ENCODE measurements at regions of chr2 and their contacts with region 1.

Region 1: DNA sequence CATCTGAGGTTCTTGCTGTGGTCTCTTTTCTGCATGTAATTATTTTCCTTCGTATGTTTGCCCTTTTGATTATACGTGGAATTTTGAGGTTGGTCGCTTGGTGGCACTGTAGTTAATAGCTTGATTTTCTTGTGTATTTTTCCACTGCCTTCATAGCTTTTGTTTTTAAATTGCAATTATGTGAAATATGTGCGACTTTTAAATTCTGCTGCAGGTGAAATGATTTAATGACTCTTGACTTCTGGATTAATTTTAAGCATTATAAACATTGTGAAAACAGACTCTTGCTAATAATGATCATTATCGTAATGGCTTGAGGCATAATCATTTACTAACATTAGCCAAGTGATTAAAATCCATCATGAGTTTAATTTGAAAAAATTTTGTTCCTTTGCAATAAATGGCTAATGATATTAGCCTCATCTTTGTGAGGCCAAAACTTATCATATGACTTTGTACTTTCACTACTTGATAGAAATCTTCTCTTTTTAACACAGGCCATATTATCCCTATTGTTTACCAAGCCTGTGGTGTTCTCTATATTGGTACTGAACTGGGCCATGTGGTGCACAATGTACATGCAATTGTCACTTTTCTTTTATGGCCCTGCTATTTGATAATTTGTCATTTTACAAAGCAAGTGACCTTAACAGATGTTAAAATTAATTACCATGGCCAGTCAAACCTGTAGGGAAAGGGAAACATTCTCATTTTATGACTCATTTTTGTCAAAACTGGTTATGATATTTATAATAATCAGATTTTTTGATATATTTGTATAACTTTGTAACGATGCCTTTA is 62.8 kb upstream of the NEUROD1 start:
- DNase-seq: peak in 1 of 2 donors; percentile 46
- ATAC-seq: peak; percentile 72

Region 2: GRCh38 chr2:180394305-180394704 is 1348.8 kb before region 1 on chr2:
- intact Hi-C with region 1: no loop called
- DNase-seq: no peak
- ATAC-seq: no peak

Region 3: DNA sequence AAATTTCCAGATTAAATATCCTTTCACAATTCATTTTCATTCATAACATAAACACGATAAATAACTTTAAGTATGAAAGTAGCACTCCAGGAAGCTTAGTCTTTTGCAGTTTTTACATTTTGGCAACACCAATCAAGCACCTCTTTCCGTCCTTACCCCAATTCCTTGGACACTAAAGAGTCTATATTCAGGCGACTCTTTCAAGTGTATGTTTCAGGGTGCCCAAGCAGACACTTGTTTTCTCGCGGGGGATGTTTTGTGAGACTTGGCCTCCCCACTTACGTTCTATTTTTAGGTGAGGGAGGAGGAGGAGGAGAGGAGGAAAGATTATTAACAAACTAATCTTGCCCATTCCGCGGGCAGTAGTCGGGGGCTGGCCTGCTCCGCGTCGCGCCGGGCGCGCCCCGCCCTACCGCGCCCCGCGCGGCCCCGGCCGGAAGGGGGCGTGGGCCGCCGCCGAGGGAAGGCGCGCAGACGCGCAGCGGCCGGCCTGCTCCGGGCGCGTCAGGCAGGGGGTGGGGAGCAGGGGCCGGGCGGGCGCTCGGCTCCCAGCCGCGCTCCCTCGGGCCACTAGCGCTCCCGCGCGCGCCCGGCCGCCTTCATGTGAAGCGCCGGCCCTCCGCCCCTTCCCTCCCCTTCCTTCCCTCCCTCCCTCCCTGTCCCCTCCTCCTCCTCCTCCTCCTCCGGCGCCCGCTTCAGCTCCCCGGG is 148.3 kb after region 1 on chr2 and contains the start of gene ITPRID2:
- intact Hi-C with region 1: no loop called
- DNase-seq: peak; percentile 84 to 90
- ATAC-seq: peak; percentile 78
- total RNA-seq, gene ITPRID2: 287 to 367 TPM

Region 4: DNA sequence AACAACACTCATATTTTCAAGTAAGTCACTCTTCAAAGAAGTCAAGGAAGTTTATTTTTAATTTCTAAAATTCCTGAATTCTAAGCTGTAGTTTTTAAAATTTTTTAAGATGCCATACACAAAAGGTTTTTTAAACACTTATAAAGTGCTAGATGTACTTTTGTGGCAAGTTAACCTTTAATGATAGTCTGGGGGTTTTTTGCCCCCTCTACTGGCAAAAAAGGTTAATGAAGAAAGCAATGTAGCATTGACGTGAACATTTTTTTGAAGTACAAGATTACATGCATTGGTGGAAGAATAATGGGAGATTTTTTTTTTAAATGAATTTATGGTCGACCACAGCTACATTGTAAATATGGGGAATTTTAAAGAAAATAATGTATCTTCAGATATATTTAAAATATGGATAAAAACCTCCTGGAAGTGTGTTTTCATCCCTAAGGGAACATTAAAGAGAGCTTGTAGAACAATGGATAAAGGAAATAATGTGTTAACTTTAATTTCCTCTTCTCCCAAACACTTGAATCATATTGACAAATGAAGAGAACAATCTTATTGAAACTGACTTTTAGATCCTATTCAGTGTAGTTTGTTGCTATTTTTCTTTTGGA is 161.0 kb after region 1 on chr2:
- intact Hi-C with region 1: loop called in 1 of 2 experiments (anchors 5 kb)
- DNase-seq: no peak
- ATAC-seq: no peak

Region 5: DNA sequence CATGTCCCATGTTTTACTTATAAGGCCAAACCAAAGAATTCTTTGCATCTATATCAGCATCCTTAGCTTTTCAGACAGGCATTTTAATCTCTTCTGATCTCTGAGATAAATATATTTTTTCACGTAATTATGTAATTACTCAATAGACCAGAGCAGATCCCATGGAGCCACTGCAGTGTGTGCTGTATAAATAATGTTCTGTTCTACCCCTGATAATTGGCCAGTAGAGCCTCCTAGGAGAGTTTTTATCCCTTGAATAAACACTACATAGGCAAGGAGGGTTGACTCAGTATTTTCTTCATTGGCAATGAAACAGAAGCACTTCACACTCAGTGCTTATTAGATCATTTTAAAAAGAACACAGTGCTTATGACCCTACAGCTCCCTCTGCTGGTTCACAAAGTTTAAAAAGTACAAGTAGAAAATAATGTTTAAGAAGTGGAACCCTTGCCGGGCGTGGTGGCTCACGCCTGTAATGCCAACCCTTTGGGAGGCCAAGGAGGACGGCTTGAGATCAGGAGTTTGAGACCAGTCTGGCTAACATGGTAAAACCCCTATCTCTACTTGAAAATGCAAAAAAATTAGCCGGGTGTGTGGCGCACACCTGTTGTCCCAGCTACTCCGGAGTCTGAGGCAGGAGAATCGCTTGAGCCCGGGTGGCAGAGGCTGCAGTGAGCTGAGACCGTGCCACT is 334.5 kb after region 1 on chr2:
- intact Hi-C with region 1: loop called in 1 of 2 experiments (anchors 5 kb)
- DNase-seq: peak in 1 of 2 donors; percentile 25
- ATAC-seq: peak; percentile 73